ENCODE measurements at regions of chr10 and their contacts with region 1.

Region 1: DNA sequence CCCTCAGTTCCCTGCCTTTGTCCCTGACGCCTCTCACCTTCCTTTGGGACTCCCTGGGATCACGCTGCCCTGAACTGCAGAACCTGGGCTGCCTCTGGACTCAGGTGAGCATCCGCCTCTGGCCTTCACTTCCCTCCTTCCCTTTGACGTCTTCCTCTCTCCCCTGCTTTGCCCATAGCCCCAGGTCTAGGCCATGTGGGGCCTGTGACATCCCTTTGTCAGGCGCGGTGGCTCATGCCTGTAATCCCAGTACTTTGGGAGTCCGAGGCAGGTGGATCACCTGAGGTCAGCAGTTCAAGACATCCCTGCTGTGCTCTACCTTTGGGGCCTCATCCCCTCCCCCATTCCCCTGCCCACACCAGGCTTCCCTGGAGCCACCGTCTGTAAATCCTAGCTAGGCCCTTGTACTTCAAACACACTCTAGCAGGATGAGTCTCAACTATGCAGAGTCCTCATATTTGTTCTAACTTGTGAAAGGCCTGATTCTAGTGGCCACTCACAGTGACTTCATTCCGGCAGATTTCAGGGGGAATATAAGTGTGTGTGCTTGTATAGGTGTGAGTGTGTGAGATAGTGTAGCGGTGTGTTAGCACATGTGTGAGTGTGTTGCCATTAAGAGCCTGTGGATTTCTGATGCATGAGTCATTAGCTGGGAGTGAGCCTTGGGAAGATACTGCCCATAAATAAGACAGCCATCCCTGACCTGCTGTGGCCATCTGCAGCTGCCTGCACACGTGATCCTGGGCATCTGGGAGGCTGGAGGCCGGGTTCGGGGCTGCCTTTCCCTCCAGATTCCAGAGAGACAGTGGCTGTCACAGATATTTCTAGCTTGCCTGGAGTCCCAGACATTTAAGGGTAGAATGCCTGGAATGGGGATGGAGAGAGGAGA is 1.8 kb upstream of the NEURL1 start:
- DNase-seq: no peak
- H3K4me3 ChIP-seq: no peak overlapping the region
- H3K27ac ChIP-seq: no peak overlapping the region
- H3K4me1 ChIP-seq: peaks cover 0 to 18% (median 17%) of the 10 kb centered on the region in 4 experiments
- H3K27me3 ChIP-seq: peaks cover 2 to 49% (median 22%) of the 10 kb centered on the region in 5 experiments

Region 2: DNA sequence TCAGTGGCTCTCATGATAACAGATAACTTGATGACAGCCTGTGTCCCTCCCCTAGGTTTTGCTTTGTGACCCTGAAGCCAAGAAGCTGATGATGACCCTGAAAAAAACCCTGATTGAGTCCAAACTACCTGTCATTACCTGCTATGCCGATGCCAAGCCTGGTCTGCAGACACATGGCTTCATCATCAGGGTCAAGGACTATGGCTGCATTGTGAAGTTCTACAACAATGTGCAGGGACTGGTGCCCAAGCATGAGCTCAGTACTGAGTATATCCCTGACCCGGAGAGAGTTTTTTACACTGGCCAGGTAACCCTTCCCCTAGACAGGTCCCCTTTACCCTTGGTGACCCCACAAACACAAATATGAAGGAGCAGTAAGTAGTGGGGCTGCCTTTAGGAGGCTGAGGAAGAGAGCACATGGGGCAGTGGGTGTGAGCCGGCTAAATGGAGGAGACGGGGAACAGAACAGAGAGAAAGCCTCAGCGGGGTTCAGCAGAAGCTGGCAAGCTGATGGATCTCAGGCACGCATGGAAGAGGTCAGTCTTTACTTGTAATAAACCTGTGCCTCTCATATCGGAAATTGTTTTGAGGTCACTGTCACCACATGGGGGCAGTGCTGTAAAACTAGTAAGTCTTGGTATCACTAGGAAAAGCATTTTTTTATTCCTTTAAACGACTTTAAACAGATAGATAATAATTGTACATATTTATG is 75.1 kb before region 1 on chr10:
- CTCF ChIA-PET with region 1: interaction called, 147 read pairs
- POLR2A ChIA-PET with region 1: interaction called, 3 read pairs
- DNase-seq: peak; percentile 74 to 88 (median 78)
- H3K4me3 ChIP-seq: no peak overlapping the region
- H3K27ac ChIP-seq: no peak overlapping the region
- H3K4me1 ChIP-seq: no peaks in the 10 kb centered on the region
- H3K27me3 ChIP-seq: no peaks in the 10 kb centered on the region

Region 3: DNA sequence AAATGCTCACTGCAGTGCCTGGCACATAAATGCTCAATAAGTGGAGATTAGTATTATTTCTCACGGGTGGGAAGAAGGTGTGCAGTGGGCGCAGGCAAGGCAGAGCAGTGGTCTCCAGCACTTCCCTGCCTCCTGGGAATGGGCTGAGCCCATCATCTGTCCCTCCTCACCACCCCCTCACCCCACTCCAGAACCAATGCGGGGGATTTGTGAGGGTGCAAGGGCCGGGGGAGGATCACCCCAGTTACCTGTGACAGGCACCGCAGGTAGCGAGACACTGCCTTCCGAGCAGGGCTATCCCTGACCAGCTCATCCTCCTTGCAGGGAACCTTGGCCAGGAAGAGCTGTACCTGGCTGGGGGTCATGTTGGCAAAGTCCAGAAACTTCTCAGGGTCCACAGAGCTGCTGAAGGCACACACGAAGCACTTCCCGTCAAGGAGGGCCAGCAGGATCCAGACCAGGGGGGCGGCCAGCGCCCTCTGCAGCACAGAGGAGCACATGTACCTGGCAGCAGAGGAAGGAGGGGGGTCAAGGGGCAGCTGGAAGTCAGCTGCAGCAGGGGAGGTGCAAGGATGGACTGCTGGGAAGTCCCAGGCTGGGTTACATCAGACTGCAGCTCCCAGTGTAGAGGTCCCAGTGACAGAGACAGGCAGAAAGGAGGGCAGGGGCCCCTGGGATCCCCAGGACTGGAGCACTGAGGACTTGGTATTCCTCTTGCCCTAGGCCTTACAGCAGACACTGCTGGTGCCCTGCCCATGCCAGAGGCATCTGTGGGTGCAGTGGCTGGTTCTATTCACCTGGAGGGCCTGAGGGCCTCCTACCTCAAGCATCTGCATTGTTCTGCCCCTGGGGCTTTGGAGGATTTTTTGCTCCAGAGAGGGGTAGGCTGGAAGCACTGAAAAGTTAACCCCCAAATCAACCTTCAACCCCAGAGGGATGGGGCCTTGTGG is 15.4 kb before region 1 on chr10:
- CTCF ChIA-PET with region 1: interaction called, 27 read pairs
- POLR2A ChIA-PET with region 1: no interaction called
- DNase-seq: peak; percentile 34 to 56 (median 52)
- H3K4me3 ChIP-seq: no peak overlapping the region
- H3K27ac ChIP-seq: no peak overlapping the region
- H3K4me1 ChIP-seq: peaks cover 4 to 43% (median 18%) of the 10 kb centered on the region in 4 experiments
- H3K27me3 ChIP-seq: no peaks in the 10 kb centered on the region

Measured in common myeloid progenitor, CD34-positive (primary cell).